Activated CD4-positive, alpha-beta T cell treated with anti-CD3 and anti-CD28 coated beads, Interleukin-2, amount 10 ng/mL, durations not matched to agents 7 days and 5 days (primary cell): ENCODE measurements at regions of chr7 and their contacts with region 1.

Region 1: DNA sequence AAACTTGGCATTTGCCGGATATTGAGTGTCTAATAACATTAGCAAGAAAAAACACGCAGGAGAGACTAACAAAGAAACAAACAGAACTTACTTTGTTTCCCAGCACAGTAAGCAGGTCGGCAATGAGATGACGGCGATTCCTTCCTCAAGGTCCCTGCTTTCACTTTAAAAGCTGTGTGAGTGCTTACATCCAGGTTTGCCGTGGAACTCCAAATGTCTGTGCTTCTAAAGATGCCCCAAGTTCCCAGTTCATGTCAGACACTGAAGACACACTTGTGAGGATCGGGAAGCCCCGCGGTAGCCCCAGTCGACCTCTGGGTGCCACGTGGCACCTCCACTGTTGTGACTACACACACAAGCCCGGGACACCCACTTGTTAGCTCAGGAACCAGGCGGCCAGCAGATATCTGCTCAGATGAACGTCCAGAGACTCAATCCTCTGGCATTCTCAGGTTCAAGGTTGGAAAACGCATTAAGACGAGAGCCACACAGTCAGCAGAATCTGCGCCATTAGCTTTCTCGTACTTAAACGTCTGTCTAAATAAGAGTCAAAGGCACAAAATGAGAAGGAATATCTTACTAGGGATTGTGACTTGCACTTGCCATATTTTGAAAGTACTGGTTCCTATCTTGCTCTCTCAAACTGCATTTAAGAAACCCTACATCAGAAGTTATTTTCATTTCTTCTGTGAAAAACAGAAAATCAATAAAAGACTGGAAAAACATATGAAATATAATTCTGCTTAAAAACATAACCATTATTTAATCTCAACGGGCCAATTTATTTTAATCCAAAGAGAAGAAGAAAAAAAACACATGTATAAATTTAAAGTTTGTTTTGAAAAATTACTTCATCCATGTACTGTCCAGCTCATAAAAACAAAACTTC is 207.6 kb upstream of the KLF14 start:
- DNase-seq: no peak
- H3K4me3 Mint-ChIP-seq: peak overlapping the region; percentile 62
- H3K27ac Mint-ChIP-seq: peak overlapping the region; percentile 79
- H3K4me1 Mint-ChIP-seq: peaks cover 86% of the 10 kb centered on the region
- H3K27me3 Mint-ChIP-seq: no peaks in the 10 kb centered on the region

Region 2: GRCh38 chr7:130845581-130846085 is 95.9 kb before region 1 on chr7:
- CTCF ChIA-PET with region 1: no interaction called
- POLR2A ChIA-PET with region 1: no interaction called
- DNase-seq: no peak
- H3K4me3 Mint-ChIP-seq: no peak overlapping the region
- H3K27ac Mint-ChIP-seq: no peak overlapping the region
- H3K4me1 Mint-ChIP-seq: peaks cover 11% of the 10 kb centered on the region
- H3K27me3 Mint-ChIP-seq: peaks cover under 1% of the 10 kb centered on the region

Region 3: DNA sequence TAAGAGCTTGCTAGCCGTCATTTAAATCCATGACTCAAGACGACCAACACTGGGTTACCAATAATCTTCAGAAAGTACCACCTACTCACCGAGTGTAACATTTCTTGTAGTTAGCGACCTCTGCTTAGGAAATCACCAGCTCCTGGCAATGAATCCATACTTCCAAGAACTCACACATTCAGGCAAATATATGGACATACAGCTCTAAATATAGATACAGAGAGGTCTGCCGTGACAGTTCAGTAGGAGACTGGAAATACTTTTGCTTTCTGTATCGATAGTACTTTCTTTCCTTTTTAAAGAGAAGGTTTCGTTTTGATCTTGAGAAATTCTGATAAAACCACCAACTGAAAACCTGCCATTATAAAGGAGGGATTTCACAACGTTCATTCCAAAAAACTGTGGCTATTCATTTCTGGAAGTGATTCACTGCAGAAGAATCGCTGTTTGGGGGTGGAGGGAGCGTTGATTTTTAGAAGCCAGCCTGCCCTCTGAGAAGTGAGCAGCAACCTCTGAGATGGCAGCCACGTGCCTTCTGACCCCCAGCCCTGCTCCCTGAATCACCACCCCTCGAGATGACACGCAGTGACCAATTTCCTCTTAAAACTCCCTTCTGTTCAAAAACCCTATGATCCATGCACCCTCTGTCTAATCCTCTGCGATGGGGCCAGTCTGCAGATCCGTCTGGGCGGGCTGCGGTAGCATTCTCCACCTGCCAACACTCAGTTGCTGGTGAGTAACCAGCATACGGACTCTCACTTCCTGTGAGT is 28.5 kb before region 1 on chr7:
- CTCF ChIA-PET with region 1: interaction called, 10 read pairs
- POLR2A ChIA-PET with region 1: interaction called, 5 read pairs
- DNase-seq: peak; percentile 88
- H3K4me3 Mint-ChIP-seq: peak overlapping the region; percentile 82
- H3K27ac Mint-ChIP-seq: peak overlapping the region; percentile 94
- H3K4me1 Mint-ChIP-seq: peaks cover 85% of the 10 kb centered on the region
- H3K27me3 Mint-ChIP-seq: no peaks in the 10 kb centered on the region

Region 4: GRCh38 chr7:130929896-130930659 is 11.5 kb before region 1 on chr7:
- CTCF ChIA-PET with region 1: interaction called, 23 read pairs
- POLR2A ChIA-PET with region 1: no interaction called
- DNase-seq: no peak
- H3K4me3 Mint-ChIP-seq: no peak overlapping the region
- H3K27ac Mint-ChIP-seq: peak overlapping the region; percentile 84
- H3K4me1 Mint-ChIP-seq: peaks cover 77% of the 10 kb centered on the region
- H3K27me3 Mint-ChIP-seq: no peaks in the 10 kb centered on the region

Region 5: DNA sequence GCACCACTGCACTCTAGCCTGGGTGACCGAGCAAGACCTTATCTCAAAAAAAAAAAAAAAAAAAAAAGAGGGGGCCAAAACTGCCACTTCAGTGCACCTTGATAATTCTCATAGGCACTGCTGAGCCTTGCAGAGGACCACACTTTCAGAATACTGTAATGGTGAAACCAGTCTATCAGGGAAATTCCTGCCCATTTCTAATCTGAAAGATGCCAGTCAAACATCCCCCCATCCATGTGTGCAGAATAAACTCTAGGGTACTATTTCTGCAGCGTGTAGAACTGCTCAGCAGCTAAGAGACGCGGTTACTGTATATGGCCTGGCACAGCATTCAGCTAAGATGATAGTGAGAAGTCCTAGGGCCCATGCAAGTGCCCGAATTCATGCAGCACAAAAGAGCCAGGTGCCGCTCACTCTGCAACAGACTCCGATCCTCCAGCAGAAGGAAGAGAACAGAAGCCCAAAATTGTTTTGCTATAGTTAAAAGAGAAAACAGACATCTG is 79.2 kb after region 1 on chr7:
- CTCF ChIA-PET with region 1: no interaction called
- POLR2A ChIA-PET with region 1: no interaction called
- DNase-seq: no peak
- H3K4me3 Mint-ChIP-seq: peak overlapping the region; percentile 0
- H3K27ac Mint-ChIP-seq: peak overlapping the region; percentile 70
- H3K4me1 Mint-ChIP-seq: peaks cover 43% of the 10 kb centered on the region
- H3K27me3 Mint-ChIP-seq: no peaks in the 10 kb centered on the region